AG04450 (cell line): ENCODE measurements at regions of chr9 and their contacts with region 1.

Region 1: DNA sequence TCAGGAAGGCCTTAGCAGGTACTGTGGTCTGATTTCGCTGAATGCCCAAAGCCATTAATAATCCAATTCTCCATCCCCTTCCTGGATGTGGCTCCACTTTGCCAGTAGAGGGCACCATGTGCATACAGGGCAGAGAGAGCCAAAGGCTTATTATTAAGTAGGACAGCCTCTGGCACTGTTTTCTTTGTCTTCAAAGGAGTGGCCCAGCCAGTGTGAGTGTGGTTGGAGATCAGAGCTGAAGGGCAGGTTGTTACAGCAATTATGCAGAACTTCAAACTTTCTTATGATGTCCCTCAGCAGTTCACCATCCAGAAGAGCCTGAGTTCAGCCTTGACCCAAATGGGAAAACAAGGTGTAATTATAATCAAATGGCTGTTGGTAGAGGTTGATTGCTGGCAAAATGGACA is 38.6 kb upstream of the CEMIP2 start:
- DNase-seq: peak; percentile 23
- H3K4me3 ChIP-seq: no peak overlapping the region
- H3K27ac ChIP-seq: no peak overlapping the region
- H3K27me3 ChIP-seq: peaks cover 2% of the 10 kb centered on the region
- CTCF ChIP-seq: peak; percentile 98

Region 2: DNA sequence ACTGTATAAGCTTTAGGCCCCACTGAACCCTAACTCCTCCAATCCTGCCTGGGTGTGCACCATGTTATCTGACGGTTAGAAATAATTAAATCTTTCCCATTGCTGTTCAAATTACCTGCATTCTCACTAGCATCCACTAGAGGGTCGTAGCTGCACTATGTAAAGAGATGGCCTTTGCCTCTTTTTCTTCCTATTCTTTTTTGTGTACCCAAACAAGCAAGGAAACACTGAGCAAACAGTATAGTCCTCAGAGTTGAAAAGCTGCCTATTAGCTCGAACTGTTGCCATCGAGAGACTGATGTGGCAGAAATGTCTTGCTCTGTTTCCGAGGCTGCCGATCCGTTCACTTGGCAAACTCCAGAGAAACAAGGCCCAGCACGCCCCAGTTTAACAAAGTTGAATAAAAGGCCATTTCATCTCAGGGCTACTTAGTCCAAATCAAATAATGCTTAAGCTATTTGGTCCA is 521.7 kb before region 1 on chr9:
- CTCF ChIA-PET with region 1: interaction called, 17 read pairs
- POLR2A ChIA-PET with region 1: no interaction called
- DNase-seq: peak; percentile 33
- H3K4me3 ChIP-seq: no peak overlapping the region
- H3K27ac ChIP-seq: no peak overlapping the region
- H3K27me3 ChIP-seq: no peaks in the 10 kb centered on the region
- CTCF ChIP-seq: peak; percentile 92

Region 3: GRCh38 chr9:71778085-71778484 is 28.8 kb before region 1 on chr9:
- CTCF ChIA-PET with region 1: interaction called, 13 read pairs
- POLR2A ChIA-PET with region 1: no interaction called
- DNase-seq: no peak
- H3K4me3 ChIP-seq: no peak overlapping the region
- H3K27ac ChIP-seq: no peak overlapping the region
- H3K27me3 ChIP-seq: peaks cover 4% of the 10 kb centered on the region
- CTCF ChIP-seq: no peak

Region 4: GRCh38 chr9:71795097-71795813 is 11.6 kb before region 1 on chr9:
- CTCF ChIA-PET with region 1: interaction called, 35 read pairs
- POLR2A ChIA-PET with region 1: no interaction called
- DNase-seq: no peak
- H3K4me3 ChIP-seq: no peak overlapping the region
- H3K27ac ChIP-seq: no peak overlapping the region
- H3K27me3 ChIP-seq: no peaks in the 10 kb centered on the region
- CTCF ChIP-seq: no peak

Region 5: DNA sequence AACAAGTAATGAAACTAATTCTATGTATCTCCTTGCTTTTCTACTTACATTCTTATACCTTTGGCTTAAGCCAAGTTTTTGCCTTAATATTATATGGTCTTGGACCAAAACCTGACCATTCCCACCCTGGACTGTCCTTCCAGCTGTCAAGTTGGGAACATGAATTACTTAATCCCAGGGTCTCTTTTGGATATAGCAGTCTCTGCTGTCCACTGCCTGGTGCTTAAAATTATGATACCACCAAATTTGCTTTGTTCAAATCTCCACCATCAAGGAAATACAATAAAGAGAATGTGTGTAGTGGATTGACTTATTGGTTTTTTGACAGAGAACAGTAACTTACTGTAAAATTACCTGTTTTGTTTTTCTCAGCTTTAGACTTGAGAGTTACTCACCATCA is 37.9 kb after region 1 on chr9:
- CTCF ChIA-PET with region 1: no interaction called
- POLR2A ChIA-PET with region 1: no interaction called
- DNase-seq: no peak
- H3K4me3 ChIP-seq: no peak overlapping the region
- H3K27ac ChIP-seq: no peak overlapping the region
- H3K27me3 ChIP-seq: no peaks in the 10 kb centered on the region
- CTCF ChIP-seq: no peak

Region 6: GRCh38 chr9:72029986-72030385 is 223.1 kb after region 1 on chr9:
- CTCF ChIA-PET with region 1: interaction called, 193 read pairs
- POLR2A ChIA-PET with region 1: no interaction called
- DNase-seq: no peak
- H3K4me3 ChIP-seq: no peak overlapping the region
- H3K27ac ChIP-seq: no peak overlapping the region
- H3K27me3 ChIP-seq: no peaks in the 10 kb centered on the region
- CTCF ChIP-seq: no peak